WTC11 (cell line): ENCODE measurements at regions of chr6 and their contacts with region 1.

Region 1: GRCh38 chr6:107655245-107655644 is 165.3 kb downstream of the SOBP start:
- DNase-seq: peak; percentile 54
- ATAC-seq: peak; percentile 90
- H3K4me3 Mint-ChIP-seq: no peak overlapping the region
- H3K27ac Mint-ChIP-seq: 0 out of 2 replicates have a peak overlapping the region, but pooled peaks have one; percentile 73
- H3K4me1 Mint-ChIP-seq: peaks cover 54% of the 10 kb centered on the region
- H3K27me3 Mint-ChIP-seq: no peaks in the 10 kb centered on the region
- CTCF ChIP-seq: no peak; the same call in 1 of the 2 replicates

Region 2: DNA sequence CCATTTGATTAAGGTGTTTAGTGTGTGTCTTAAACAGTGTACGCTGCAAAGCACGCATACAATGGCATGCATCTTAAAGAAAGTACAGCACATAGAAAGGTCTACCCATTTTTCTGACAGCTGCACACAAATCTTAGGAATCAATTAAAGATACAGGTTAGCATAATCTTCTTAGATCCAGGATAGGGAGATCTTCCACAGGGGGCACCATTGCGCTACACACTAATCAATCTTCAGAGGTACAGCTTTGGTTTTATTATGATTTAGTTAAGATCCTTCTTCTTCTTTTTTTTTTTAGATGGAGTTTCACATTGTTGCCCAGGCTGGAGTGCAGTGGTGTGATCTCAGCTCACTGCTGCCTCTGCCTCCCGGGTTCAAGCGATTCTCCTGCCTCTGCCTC is 476.2 kb before region 1 on chr6:
- CTCF ChIA-PET with region 1: interaction called, 10 read pairs
- POLR2A ChIA-PET with region 1: no interaction called
- DNase-seq: peak; percentile 17
- ATAC-seq: no peak
- H3K4me3 Mint-ChIP-seq: no peak overlapping the region
- H3K27ac Mint-ChIP-seq: no peak overlapping the region
- H3K4me1 Mint-ChIP-seq: no peaks in the 10 kb centered on the region
- H3K27me3 Mint-ChIP-seq: no peaks in the 10 kb centered on the region
- CTCF ChIP-seq: no peak

Region 3: DNA sequence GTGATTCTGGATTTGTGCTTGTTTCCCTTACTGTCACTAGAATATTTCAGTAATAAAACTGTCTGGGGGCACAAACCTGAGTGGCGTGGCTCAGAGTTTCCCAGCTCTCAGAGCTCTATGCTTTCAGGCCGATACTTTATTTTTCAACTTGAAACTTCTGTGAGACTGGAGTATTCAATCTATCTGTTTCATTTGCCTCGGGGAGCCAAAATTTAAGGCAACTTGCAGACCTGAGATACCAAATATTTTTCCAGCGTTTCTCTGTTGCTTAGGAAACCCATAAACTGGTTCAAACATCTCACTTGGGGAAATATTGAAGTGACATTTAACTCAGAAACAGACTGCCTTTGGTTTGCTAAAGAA is 90.7 kb before region 1 on chr6:
- CTCF ChIA-PET with region 1: no interaction called
- POLR2A ChIA-PET with region 1: no interaction called
- DNase-seq: no peak
- ATAC-seq: no peak
- H3K4me3 Mint-ChIP-seq: no peak overlapping the region
- H3K27ac Mint-ChIP-seq: peak overlapping the region; percentile 14; the same call in 1 of the 2 replicates
- H3K4me1 Mint-ChIP-seq: peaks cover 30% of the 10 kb centered on the region
- H3K27me3 Mint-ChIP-seq: no peaks in the 10 kb centered on the region; the same call in 1 of the 2 replicates
- CTCF ChIP-seq: no peak

Region 4: DNA sequence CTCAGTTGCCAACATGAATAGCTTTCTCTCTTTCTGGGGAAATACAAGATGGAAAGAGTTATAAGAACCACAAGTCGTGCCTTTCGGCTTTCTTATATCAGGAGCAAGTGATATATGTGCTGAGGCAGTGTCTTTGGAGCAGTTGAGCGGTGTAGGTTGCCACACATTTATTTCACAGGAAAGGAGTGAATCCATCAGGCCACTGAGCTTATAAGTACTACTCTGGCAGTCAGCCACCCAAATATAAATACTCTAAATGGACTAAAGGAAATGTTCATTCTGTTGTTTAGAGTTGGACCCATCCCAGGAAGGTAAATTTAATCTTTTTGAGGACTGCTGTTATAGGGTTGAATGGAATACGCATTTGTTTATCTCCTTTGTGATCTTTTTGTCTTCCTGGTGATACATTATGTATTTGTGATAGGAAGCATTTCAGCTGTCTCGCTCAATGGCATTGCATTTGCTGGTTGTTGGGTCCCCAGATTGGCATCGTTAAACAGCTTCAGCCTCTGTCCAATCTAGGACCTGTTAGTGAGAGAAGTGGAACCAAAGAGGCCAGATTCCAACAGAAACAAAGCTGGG is 25.6 kb before region 1 on chr6:
- CTCF ChIA-PET with region 1: interaction called, 11 read pairs
- POLR2A ChIA-PET with region 1: no interaction called
- DNase-seq: no peak
- ATAC-seq: no peak
- H3K4me3 Mint-ChIP-seq: no peak overlapping the region
- H3K27ac Mint-ChIP-seq: 0 out of 2 replicates have a peak overlapping the region, but pooled peaks have one; percentile 47
- H3K4me1 Mint-ChIP-seq: peaks cover 42% of the 10 kb centered on the region
- H3K27me3 Mint-ChIP-seq: peaks cover 24% of the 10 kb centered on the region
- CTCF ChIP-seq: no peak

Region 5: DNA sequence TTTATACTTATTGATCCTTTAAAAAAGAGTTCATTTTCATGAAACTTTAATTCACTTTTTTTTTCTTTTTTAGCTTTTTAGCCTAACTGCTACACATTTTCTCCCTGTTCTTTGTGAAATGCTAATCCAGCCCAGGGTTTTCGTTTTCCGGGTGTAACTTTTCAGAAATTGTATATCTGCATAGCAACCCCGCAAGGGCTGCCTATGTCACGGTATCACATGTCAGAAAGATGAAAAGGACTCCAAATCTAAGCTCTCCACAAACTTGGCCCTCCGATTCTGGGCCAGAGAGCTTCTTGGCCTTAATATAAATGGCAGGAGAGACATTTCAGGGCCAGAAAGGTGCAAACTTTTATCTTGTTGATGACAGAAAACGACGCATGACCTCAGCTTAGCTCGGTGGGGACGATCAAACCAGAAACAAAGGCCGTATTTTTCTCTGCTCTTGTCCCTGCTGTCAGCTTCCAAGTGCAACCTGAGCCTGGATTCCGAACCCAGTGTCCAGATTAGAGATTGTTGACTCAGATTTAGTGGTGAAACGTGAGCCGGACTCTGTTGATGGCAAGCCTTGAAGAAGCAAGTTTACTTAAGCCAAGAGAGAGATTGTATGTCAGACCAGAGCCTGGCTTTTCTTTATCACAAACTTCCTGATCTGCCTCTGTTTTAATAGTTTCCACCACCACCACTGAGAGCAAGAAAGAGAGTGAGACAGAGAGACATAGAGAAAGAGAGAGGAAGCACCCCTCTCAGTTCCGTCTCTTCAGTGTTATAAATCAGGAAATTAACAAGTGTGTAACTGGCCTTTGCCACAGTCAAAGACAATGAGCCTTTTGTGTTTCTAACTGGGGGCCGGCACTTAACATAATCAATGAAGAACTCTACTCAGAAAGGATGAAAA is 11.1 kb after region 1 on chr6:
- CTCF ChIA-PET with region 1: interaction called, 12 read pairs
- POLR2A ChIA-PET with region 1: no interaction called
- DNase-seq: no peak
- ATAC-seq: no peak
- H3K4me3 Mint-ChIP-seq: no peak overlapping the region
- H3K27ac Mint-ChIP-seq: peak overlapping the region; percentile 45
- H3K4me1 Mint-ChIP-seq: peaks cover 55% of the 10 kb centered on the region
- H3K27me3 Mint-ChIP-seq: no peaks in the 10 kb centered on the region; the same call in 1 of the 2 replicates
- CTCF ChIP-seq: no peak

Region 6: DNA sequence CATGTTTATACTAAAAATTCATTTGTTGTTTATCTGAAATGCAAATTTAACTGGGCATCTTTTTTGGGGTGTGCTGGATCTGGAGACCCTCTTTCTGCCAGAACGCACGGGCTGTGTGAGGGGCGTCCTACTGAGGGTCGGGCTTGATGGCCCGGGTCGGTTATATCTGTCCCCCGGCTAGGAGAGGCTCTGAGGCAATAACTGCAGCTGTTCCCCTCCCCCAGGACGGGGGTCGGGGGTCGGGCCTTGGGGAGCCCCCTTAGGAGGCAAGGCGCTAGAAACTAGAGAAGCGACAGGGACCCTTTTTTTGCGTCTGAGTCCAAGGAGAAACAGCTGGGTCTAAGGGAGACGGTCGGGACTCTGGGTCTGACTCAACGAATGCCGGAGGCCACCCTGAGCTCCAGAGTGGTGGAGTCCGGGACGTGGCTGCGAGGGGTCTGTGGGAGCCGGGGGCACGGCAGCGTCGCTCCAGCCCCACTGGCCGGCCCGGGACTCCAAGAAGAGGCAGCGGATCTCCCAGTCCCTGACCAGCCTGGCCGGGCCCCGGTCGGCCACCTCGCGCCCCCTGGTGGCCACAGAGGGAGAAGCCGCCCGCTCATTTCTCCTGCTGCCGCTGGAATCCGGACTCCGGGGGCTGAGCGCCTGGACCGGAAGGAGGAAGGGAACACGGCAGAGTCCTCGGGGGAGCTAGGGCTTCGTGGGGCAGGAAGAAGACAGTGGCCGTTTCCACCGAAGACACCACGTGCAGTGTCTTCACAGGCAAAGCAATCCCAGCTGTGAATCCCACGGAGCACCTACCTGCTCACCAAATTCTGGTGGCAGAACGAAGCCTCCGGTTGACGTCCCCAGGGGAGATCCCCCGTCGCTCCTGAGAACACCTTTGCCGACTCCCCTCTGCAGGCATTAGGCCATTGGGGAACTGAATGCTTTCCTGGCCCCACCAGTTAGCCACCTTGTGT is 192.9 kb after region 1 on chr6:
- CTCF ChIA-PET with region 1: no interaction called
- POLR2A ChIA-PET with region 1: no interaction called
- DNase-seq: peak; percentile 95
- ATAC-seq: peak; percentile 92
- H3K4me3 Mint-ChIP-seq: peak overlapping the region; percentile 79
- H3K27ac Mint-ChIP-seq: no peak overlapping the region
- H3K4me1 Mint-ChIP-seq: peaks cover 11% of the 10 kb centered on the region
- H3K27me3 Mint-ChIP-seq: peaks cover 23% of the 10 kb centered on the region
- CTCF ChIP-seq: peak; percentile 98